ENCODE measurements at regions of chr9 and their contacts with region 1.

Region 1: GRCh38 chr9:107874591-107875369 is 385.2 kb upstream of the KLF4 start:
- DNase-seq: peak; percentile 62 to 79 (median 69)
- H3K4me3 ChIP-seq: peak overlapping the region in 1 of 3 experiments; percentile 46
- H3K4me3 Mint-ChIP-seq: peak overlapping the region in 1 of 2 donors; percentile 59
- H3K27ac ChIP-seq: peak overlapping the region; percentile 71 to 88
- H3K27ac Mint-ChIP-seq: peak overlapping the region; percentile 89 to 97 (median 95)
- H3K4me1 ChIP-seq: peaks cover 63 to 76% of the 10 kb centered on the region in 2 donors
- H3K4me1 Mint-ChIP-seq: peaks cover 78% of the 10 kb centered on the region
- H3K27me3 ChIP-seq: no peaks in the 10 kb centered on the region
- H3K27me3 Mint-ChIP-seq: no peaks in the 10 kb centered on the region
- CTCF ChIP-seq: no peak

Region 2: GRCh38 chr9:107841076-107841475 is 33.7 kb before region 1 on chr9:
- intact Hi-C with region 1: loop called in 1 of 2 experiments (anchors 5 kb)
- DNase-seq: peak; percentile 44 to 83 (median 73)
- H3K4me3 ChIP-seq: peak overlapping the region in 1 of 3 experiments; percentile 39
- H3K4me3 Mint-ChIP-seq: peak overlapping the region; percentile 8 to 82
- H3K27ac ChIP-seq: peak overlapping the region in 1 of 2 donors; percentile 64
- H3K27ac Mint-ChIP-seq: peak overlapping the region; percentile 73 to 93 (median 90)
- H3K4me1 ChIP-seq: peaks cover 37 to 51% of the 10 kb centered on the region in 2 donors
- H3K4me1 Mint-ChIP-seq: peaks cover 50% of the 10 kb centered on the region
- H3K27me3 ChIP-seq: no peaks in the 10 kb centered on the region
- H3K27me3 Mint-ChIP-seq: peaks cover 0 to 2% (median 0%) of the 10 kb centered on the region in 3 donors
- CTCF ChIP-seq: no peak

Region 3: DNA sequence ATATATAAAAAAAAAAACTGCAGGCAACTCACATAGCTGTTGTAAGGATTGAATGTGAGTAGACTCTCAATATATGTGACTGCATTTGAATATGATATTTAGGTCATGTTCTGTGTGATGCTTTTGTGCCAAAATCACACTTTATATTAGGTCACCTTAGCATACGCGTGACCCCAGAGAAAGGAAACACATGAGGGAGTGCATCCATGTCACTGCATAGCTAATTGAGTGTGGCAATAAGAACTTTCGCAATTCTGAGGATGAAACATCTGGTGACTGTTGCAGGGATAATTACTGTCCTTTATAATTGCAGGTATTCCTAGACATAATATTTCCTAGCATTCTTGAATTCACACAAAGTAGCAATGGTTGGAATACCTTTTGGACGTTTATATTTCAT is 74.3 kb after region 1 on chr9:
- intact Hi-C with region 1: loop called in 1 of 2 experiments (anchors 5 kb)
- DNase-seq: peak; percentile 76 to 94 (median 94)
- H3K4me3 ChIP-seq: no peak overlapping the region
- H3K4me3 Mint-ChIP-seq: no peak overlapping the region
- H3K27ac ChIP-seq: peak overlapping the region; percentile 0 to 68
- H3K27ac Mint-ChIP-seq: peak overlapping the region; percentile 85 to 98 (median 91)
- H3K4me1 ChIP-seq: peaks cover 43 to 45% of the 10 kb centered on the region in 2 donors
- H3K4me1 Mint-ChIP-seq: peaks cover 48% of the 10 kb centered on the region
- H3K27me3 ChIP-seq: no peaks in the 10 kb centered on the region
- H3K27me3 Mint-ChIP-seq: peaks cover 0 to 2% (median 0%) of the 10 kb centered on the region in 3 donors
- CTCF ChIP-seq: no peak

Region 4: DNA sequence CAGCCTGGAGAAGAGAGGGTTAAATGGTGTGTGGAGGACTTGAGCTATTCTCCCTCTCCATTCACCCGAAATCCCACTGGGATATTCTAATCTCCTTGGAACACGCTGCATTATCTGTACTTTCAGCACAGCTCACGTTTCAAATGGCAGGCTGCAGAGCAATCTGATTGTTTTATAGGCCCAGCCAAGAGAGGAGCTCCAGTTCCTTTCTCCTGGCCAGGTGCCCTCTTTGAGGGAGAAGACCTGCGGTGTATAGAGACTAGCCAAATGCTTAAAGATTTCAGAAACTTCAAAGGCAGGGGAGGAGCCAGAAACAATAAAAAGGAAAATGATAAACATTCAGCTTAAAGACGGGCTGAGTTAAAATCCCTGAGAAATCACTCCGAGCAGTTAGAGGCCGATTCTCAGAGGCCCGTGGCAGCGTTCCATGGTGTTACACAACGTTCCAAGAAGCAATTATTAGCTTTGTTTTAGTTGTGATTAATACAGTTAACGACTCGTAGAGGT is 178.8 kb after region 1 on chr9:
- intact Hi-C with region 1: loop called in 1 of 2 experiments (anchors 5 kb)
- DNase-seq: no peak
- H3K4me3 ChIP-seq: no peak overlapping the region
- H3K4me3 Mint-ChIP-seq: no peak overlapping the region
- H3K27ac ChIP-seq: no peak overlapping the region
- H3K27ac Mint-ChIP-seq: no peak overlapping the region
- H3K4me1 ChIP-seq: peaks cover 38 to 41% of the 10 kb centered on the region in 2 donors
- H3K4me1 Mint-ChIP-seq: peaks cover 41% of the 10 kb centered on the region
- H3K27me3 ChIP-seq: no peaks in the 10 kb centered on the region
- H3K27me3 Mint-ChIP-seq: peaks cover 1 to 2% (median 1%) of the 10 kb centered on the region in 3 donors
- CTCF ChIP-seq: no peak

Region 5: DNA sequence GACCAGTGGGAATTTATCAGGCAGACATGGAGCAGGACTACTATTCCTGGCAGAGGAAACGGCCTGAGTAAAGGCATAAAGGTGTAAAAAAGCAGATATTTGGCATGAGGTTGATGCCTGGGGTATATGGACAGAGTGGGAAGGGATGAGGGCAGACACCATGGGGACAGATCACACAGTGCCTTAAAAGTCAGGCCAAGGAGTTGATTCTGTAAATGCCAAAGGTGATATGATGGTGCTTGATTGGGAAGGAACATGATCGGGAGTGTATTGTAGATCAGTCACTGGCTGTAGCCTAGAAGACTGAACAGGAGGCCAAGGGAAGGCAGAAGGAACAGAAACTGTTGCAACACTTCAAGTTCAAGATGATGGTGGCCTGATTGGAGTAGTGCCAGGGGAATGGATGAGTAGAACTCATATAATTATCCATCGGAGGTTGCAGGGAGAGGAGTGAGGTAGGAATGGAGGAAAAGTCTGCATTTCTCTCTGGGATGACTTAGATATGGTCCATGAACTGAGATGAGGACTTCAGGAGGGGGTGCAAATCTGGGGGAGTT is 209.1 kb after region 1 on chr9:
- intact Hi-C with region 1: no loop called
- DNase-seq: peak; percentile 58 to 77 (median 72)
- H3K4me3 ChIP-seq: no peak overlapping the region
- H3K4me3 Mint-ChIP-seq: peak overlapping the region in 1 of 2 donors; percentile 8
- H3K27ac ChIP-seq: no peak overlapping the region
- H3K27ac Mint-ChIP-seq: peak overlapping the region in 1 of 7 donors; percentile 6
- H3K4me1 ChIP-seq: peaks cover 23% of the 10 kb centered on the region in 2 donors
- H3K4me1 Mint-ChIP-seq: peaks cover 23% of the 10 kb centered on the region
- H3K27me3 ChIP-seq: no peaks in the 10 kb centered on the region
- H3K27me3 Mint-ChIP-seq: no peaks in the 10 kb centered on the region
- CTCF ChIP-seq: no peak

Measured in CD14-positive monocyte (primary cell).